ENCODE measurements at regions of chr15 and their contacts with region 1.

Region 1: DNA sequence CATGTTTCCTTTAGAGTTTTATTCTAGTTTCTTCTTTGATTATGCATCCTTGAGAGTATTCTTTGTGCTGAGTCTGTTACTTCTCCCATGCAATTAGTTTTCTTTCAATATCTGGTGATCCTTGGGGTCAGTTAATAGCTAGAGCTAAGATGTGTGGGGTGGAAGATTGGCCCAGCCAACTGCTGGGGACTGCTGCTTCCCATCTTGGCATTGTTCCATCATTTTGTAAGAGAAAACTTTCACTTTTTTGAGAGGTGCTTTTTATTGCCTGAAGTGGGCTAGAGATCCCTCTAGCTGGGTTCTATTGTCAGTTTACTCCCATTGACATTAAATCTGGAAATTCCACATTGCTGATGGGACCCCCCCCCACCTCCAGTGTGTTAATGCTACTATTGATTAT is 15.4 kb downstream of the BCL2L10 start:
- DNase-seq: no peak
- H3K4me3 ChIP-seq: no peak overlapping the region
- H3K27ac ChIP-seq: no peak overlapping the region
- H3K27me3 ChIP-seq: no peaks in the 10 kb centered on the region
- CTCF ChIP-seq: no peak

Region 2: DNA sequence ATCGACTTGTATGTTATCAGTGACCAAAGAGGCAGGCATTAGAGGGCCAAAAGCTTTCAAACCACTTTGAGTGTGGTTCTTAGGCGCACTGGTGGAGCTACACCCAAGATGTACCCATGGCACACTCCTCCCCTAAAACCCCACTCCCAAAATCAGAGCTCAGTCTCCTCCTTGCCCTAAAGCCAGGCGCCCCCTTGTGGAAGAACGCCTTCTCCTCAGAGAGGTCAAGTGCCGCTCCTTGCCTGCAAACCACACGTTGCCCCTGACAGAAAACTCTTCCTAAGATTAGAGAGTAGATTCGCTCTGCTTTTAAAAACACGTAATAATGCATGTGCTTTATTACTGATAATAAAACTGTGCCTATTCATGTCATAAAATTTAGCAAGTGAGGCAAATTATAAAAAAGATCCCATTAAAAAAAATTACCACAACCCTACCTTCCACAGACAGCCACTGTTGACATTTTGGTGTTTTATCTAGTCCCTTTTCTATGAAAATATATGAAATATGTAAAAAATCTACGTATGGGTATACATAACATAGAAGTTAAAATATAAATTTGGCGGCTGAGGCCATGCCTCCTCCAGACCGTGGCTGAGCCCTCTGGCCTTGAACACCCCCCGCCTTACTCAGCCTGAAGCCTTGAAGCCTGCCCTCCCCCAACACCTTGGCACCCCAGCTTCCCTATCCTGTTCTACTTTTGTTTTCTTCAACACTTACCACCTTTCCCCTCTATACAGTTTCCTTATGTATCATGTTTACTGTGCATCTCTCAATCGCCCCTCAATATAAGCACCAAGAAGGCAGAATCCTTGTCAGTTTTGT is 18.1 kb before region 1 on chr15:
- CTCF ChIA-PET with region 1: interaction called, 19 read pairs
- POLR2A ChIA-PET with region 1: no interaction called
- DNase-seq: no peak
- H3K4me3 ChIP-seq: no peak overlapping the region
- H3K27ac ChIP-seq: no peak overlapping the region
- H3K27me3 ChIP-seq: no peaks in the 10 kb centered on the region
- CTCF ChIP-seq: peak; percentile 79

Region 3: DNA sequence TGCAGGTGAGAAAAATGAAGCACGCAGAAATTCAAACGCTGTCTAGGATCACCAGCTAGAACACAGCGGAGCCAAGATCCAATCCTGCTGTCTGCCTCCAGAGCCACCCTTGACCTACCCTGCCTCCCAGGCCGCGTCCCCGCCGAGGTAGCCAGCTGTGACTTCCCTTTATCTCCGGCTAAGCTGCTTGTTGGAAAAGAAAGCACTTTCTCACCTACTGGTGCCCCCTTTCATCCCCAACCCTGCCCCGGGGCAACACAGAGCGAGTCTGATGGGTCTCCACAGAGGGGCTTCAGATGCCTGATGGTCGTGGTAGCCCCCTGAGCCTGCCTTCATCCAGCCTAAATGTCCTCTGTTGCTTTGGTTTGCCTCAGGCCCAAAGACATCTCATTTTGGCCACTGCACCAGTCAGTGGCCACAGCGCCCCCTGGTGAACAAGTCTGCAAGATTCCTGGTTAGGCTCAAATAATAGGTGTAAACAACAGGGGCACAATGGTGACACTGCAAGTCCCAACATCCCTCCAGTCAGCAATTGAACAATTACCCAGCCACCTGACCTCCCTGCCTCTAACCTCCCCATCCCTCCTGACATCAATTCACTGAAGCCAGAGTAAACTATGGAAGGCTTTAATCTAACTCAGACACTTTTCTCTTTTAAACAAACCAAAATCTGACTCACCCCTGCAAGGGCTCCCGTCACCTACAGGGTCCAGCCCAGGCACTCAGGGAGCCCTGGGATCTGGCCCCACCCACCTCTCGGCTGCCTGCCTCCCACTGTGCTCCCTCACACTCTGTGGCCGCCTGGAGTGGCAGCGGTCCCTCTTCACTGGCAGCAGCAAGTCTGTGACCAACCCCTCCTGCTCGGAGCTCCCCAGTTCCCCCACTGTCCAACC is 42.7 kb after region 1 on chr15:
- CTCF ChIA-PET with region 1: interaction called, 10 read pairs
- POLR2A ChIA-PET with region 1: no interaction called
- DNase-seq: no peak
- H3K4me3 ChIP-seq: no peak overlapping the region
- H3K27ac ChIP-seq: no peak overlapping the region
- H3K27me3 ChIP-seq: no peaks in the 10 kb centered on the region
- CTCF ChIP-seq: peak; percentile 85

Measured in AG04450 (cell line).